Caco-2 (cell line): ENCODE measurements at regions of chr3 and their contacts with region 1.

Region 1: DNA sequence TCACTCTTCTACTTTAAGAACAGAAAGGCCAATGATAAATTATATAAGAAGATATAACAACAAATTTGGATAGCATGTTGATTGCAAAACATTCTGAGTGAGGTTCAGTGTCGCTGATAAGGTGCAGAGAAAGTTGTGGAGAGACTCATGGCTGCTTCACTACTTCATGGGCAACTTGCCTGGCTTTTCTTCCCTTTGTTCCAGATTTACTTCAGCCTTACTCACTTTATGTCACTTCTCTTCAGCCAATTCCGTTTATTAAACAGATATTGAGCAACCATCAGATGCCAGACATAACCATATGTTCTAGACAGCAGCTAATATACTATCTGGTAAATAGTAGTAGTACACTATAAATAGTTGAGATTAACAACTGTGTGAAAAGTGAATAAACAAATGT is 150.0 kb upstream of the CHL1 start:
- DNase-seq: no peak
- H3K4me3 ChIP-seq: no peak overlapping the region
- H3K4me3 Mint-ChIP-seq: no peak overlapping the region
- H3K27ac Mint-ChIP-seq: no peak overlapping the region
- H3K4me1 ChIP-seq: no peaks in the 10 kb centered on the region
- H3K4me1 Mint-ChIP-seq: no peaks in the 10 kb centered on the region
- H3K27me3 ChIP-seq: no peaks in the 10 kb centered on the region
- H3K27me3 Mint-ChIP-seq: peaks cover 10% of the 10 kb centered on the region
- CTCF ChIP-seq: no peak

Region 2: DNA sequence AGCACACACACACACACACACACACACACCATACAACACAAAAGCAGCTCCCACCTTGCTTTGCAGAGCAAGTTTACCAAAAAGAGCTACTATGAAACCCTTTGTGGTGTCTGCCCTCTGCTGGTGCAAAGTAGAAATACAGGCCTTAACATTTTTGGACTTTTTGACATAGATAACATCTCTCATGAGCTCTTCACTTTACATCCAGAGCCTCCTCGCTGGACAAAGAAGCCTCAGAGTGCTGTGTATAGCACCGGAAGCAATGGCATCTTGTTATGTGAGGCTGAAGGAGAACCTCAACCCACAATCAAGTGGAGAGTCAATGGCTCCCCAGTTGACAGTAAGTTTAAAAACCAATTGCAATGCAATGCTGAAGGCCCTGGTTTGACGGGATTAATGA is 307.9 kb after region 1 on chr3:
- CTCF ChIA-PET with region 1: interaction called, 15 read pairs
- POLR2A ChIA-PET with region 1: no interaction called
- intact Hi-C with region 1: loop called (anchors 1 kb)
- DNase-seq: peak; percentile 39 to 63
- H3K4me3 ChIP-seq: no peak overlapping the region
- H3K4me3 Mint-ChIP-seq: no peak overlapping the region
- H3K27ac Mint-ChIP-seq: no peak overlapping the region
- H3K4me1 ChIP-seq: no peaks in the 10 kb centered on the region
- H3K4me1 Mint-ChIP-seq: no peaks in the 10 kb centered on the region
- H3K27me3 ChIP-seq: no peaks in the 10 kb centered on the region
- H3K27me3 Mint-ChIP-seq: peaks cover 7% of the 10 kb centered on the region
- CTCF ChIP-seq: peak; percentile 75 to 76

Region 3: GRCh38 chr3:377158-377561 is 330.6 kb after region 1 on chr3:
- CTCF ChIA-PET with region 1: interaction called, 3 read pairs
- POLR2A ChIA-PET with region 1: no interaction called
- intact Hi-C with region 1: loop called (anchors 1 kb)
- DNase-seq: peak in 1 of 2 experiments; percentile 18
- H3K4me3 ChIP-seq: no peak overlapping the region
- H3K4me3 Mint-ChIP-seq: no peak overlapping the region
- H3K27ac Mint-ChIP-seq: no peak overlapping the region
- H3K4me1 ChIP-seq: no peaks in the 10 kb centered on the region
- H3K4me1 Mint-ChIP-seq: no peaks in the 10 kb centered on the region
- H3K27me3 ChIP-seq: no peaks in the 10 kb centered on the region
- H3K27me3 Mint-ChIP-seq: peaks cover 5% of the 10 kb centered on the region
- CTCF ChIP-seq: peak in 1 of 2 experiments; percentile 43